ENCODE measurements at regions of chr3 and their contacts with region 1.

Region 1: DNA sequence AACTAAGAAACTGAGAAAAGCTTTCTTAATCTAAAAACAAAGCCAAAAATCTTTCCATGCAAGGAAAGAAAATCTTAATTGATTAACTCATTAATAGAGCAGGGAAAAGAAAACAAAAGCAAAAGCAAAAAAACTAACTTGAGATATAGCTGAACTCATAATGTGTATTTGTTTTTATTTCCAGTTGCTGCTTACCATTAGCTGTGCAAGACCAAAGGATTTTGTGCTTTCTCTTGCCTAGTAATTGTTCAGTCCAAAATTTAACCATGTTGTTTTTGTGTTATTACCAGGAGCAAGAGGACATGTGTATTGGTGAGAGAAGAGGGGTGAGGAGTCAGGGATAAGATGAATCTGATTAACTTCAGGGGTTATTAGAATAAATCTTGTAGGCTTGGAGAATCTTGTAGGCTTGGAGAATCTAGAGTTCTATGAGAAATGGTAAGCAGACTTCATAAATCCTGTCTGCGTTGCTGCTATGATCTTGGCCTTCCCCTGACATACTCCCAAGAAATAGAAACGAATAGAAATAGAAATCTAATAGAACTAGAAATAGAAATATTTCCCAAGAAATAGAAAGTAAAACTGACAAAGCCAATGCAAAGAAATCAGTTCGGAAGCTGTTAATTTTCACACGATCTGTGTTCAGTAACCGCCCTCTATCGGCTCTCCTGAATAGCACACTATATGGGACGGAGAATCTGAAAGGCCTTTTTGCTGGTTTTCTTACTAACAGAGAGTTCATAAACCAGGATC is 72.6 kb upstream of the TNFSF10 start:
- DNase-seq: peak in 7 of 9 donors; percentile 38 to 75 (median 64)
- ATAC-seq: peak; percentile 61
- H3K4me3 ChIP-seq: peak overlapping the region; percentile 44
- H3K4me3 Mint-ChIP-seq: peak overlapping the region; percentile 39 to 92 (median 86)
- H3K27ac ChIP-seq: peak overlapping the region; percentile 70
- H3K27ac Mint-ChIP-seq: peak overlapping the region; percentile 53 to 96 (median 89)
- H3K4me1 ChIP-seq: peaks cover 35% of the 10 kb centered on the region in 2 donors
- H3K4me1 Mint-ChIP-seq: peaks cover 43 to 67% (median 58%) of the 10 kb centered on the region in 7 donors
- H3K27me3 ChIP-seq: no peaks in the 10 kb centered on the region
- H3K27me3 Mint-ChIP-seq: no peaks in the 10 kb centered on the region

Region 2: GRCh38 chr3:170869645-170870593 is 1725.9 kb before region 1 on chr3 and contains the start of gene RPL22L1:
- CTCF ChIA-PET with region 1: no interaction called
- POLR2A ChIA-PET with region 1: no interaction called
- intact Hi-C with region 1: loop called in 1 of 2 experiments (anchors 10 kb)
- DNase-seq: peak; percentile 83 to 92 (median 90)
- ATAC-seq: peak; percentile 96
- H3K4me3 ChIP-seq: peak within 1 kb of the TSS; percentile 84
- H3K4me3 Mint-ChIP-seq: peak within 1 kb of the TSS; percentile 93 to 98 (median 94)
- H3K27ac ChIP-seq: peak within 1 kb of the TSS; percentile 86
- H3K27ac Mint-ChIP-seq: peak within 1 kb of the TSS; percentile 96 to 99 (median 98)
- H3K4me1 ChIP-seq: peaks cover 22% of the 10 kb centered on the region in 2 donors
- H3K4me1 Mint-ChIP-seq: peaks cover 10 to 41% (median 26%) of the 10 kb centered on the region in 7 donors
- H3K27me3 ChIP-seq: no peaks in the 10 kb centered on the region
- H3K27me3 Mint-ChIP-seq: peaks cover 0 to 4% (median 0%) of the 10 kb centered on the region in 5 donors
- total RNA-seq, gene RPL22L1: 27.5 to 62.6 (median 47.9) TPM

Region 3: DNA sequence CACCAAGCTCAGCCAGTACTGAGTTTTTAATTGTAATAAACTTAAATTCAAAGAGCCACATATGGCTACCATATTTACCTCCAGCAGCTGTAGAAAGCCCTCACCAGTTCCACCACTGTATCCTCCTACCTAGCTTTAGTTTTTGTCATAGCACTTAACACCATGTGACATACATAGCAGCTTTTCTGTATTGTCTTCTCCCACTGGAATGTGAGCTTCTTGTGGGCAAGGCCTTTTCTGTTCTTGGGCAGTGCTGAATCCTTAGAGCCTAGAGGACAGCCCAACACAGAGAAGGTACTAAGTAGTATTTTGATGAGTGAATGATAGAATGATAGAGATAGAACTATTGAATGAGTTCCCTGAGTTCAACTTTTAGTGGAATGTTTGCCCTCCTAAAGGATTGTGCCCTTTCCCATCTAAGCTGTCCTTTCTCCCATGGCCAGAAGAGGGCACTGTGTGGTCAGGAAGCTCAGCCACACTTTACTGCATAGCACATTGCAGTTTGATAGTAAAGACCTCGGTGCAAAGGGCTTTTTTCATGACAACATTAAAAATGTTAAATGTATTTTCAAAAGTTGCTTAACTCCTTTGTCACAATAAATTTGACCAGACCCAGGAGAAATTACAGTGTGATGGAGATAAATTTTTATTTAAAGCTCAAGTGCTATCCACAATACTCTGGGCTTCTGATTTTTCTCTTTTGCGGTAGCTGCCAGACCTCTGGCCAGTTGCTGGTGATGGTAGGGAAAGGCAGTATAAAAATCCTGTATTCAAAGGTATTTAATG is 263.4 kb before region 1 on chr3:
- CTCF ChIA-PET with region 1: interaction called, 7 read pairs
- POLR2A ChIA-PET with region 1: no interaction called
- intact Hi-C with region 1: loop called in 1 of 2 experiments (anchors 1 kb)
- DNase-seq: peak; percentile 3 to 55 (median 41)
- ATAC-seq: peak; percentile 92
- H3K4me3 ChIP-seq: no peak overlapping the region
- H3K4me3 Mint-ChIP-seq: no peak overlapping the region
- H3K27ac ChIP-seq: no peak overlapping the region
- H3K27ac Mint-ChIP-seq: peak overlapping the region in 2 of 9 donors; percentile 12 to 36
- H3K4me1 ChIP-seq: no peaks in the 10 kb centered on the region
- H3K4me1 Mint-ChIP-seq: peaks cover 0 to 10% (median 4%) of the 10 kb centered on the region in 7 donors
- H3K27me3 ChIP-seq: no peaks in the 10 kb centered on the region
- H3K27me3 Mint-ChIP-seq: no peaks in the 10 kb centered on the region

Region 4: DNA sequence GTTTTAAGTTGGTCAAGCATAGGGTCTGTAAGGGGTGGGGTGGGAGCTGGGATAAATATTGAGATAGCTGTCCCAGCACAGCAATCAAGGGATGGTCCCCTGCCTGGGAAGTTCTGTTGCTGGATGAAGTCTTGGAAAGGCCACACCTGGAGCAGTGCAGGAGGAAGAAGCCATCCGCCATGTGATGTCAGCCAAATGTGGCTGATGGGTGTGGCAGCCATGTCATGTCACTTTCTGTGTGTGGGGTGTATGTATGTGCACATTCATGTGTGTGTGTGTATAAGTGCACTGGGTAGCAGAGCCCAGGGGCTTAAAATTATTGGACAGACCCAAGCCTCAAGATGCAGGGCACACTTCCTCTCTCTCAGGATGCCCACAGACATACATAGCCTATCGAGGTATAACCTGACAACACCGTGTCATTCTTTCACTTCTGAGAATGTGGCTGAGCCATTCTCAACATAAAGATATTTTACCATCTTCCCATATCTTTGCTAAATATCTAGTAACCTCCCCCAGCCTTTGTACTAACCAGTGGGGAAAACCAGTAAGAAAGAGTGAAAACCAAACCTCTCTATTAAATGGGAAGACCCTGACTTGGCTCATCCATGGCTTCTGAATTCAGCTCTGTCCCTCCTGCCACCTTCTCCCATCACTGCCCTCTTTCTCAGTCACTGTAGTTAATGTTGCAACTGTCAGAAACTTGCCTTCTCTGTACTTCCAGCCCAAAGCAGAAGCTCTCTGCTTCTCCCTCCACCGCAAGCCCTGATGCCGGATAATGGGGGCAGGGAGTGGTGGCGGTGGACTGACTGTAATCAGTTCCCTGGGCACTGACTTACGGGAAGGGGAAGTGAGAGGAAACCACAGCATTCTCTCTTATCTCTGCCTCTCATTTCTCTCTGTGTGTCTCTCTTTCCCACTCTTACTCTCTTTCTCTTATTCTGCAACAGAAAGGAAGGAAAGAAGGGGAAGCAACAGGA is 83.7 kb before region 1 on chr3:
- CTCF ChIA-PET with region 1: interaction called, 11 read pairs
- POLR2A ChIA-PET with region 1: interaction called, 5 read pairs
- intact Hi-C with region 1: loop called (anchors 1 kb)
- DNase-seq: peak in 7 of 9 donors; percentile 28 to 76 (median 48)
- ATAC-seq: peak; percentile 87
- H3K4me3 ChIP-seq: peak overlapping the region; percentile 2
- H3K4me3 Mint-ChIP-seq: peak overlapping the region; percentile 62 to 93 (median 80)
- H3K27ac ChIP-seq: peak overlapping the region; percentile 61
- H3K27ac Mint-ChIP-seq: peak overlapping the region; percentile 88 to 100 (median 93)
- H3K4me1 ChIP-seq: peaks cover 52 to 56% of the 10 kb centered on the region in 2 donors
- H3K4me1 Mint-ChIP-seq: peaks cover 65 to 91% (median 84%) of the 10 kb centered on the region in 7 donors
- H3K27me3 ChIP-seq: no peaks in the 10 kb centered on the region
- H3K27me3 Mint-ChIP-seq: no peaks in the 10 kb centered on the region

Region 5: DNA sequence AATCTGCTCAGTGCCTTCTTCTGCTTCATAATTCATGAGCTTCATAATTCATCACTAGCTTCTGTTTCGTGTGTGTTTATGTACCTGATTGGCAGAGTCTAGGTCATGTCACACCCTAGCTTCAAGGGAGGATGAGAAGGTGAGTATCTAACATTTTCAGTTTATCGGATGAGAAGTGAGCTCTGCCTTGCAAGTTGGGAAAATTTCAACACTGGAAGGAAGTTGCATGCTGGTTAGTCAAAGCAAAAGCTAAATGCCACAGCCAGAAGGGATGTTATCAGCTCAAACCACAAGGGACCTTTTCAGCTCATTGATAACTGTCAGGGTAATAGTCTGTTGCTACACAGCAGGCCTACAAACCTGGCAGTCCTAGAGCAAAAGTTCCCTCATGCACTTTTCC is 65.3 kb before region 1 on chr3:
- CTCF ChIA-PET with region 1: interaction called, 9 read pairs
- POLR2A ChIA-PET with region 1: interaction called, 8 read pairs
- intact Hi-C with region 1: loop called in 1 of 2 experiments (anchors 1 kb)
- DNase-seq: peak in 4 of 9 donors; percentile 31 to 43 (median 38)
- ATAC-seq: peak; percentile 83
- H3K4me3 ChIP-seq: peak overlapping the region; percentile 2
- H3K4me3 Mint-ChIP-seq: peak overlapping the region in 9 of 10 donors; percentile 14 to 84 (median 69)
- H3K27ac ChIP-seq: peak overlapping the region; percentile 9
- H3K27ac Mint-ChIP-seq: peak overlapping the region; percentile 40 to 93 (median 80)
- H3K4me1 ChIP-seq: peaks cover 14 to 18% of the 10 kb centered on the region in 2 donors
- H3K4me1 Mint-ChIP-seq: peaks cover 15 to 69% (median 30%) of the 10 kb centered on the region in 7 donors
- H3K27me3 ChIP-seq: no peaks in the 10 kb centered on the region
- H3K27me3 Mint-ChIP-seq: no peaks in the 10 kb centered on the region

Region 6: DNA sequence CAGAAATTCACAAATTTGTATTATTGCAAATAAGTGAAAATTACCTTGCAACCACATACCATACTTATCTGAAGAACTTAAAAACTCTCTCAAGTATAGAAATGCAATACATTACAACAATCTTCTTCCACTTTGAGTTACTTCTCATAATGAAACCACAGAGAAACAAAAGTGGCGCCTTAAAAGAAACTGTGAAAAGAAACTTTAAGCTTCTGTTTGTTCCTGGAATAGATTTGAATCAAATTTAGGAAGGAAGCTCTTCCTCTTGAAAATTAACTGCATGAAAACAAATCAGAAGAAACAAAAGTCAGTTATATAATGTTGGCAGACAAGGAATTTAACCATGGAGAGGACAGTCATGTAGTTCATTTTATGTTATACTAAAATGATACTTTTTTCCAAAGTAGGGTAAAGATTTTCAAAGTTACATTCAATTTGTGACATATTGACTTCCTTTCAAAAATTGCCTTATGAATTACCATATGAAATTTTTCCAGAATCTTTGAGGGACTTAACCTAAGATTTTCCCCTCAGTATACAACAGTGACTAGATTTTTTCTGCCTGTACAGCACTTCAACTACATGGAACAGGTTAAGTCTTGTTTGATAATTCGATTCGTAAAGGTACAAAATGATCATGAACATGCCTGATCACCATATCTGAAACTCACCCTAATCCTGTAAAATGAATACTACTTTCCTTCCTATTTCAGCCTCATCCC is 15.0 kb before region 1 on chr3:
- CTCF ChIA-PET with region 1: interaction called, 4 read pairs
- POLR2A ChIA-PET with region 1: interaction called, 10 read pairs
- intact Hi-C with region 1: loop called (anchors 1 kb)
- DNase-seq: peak in 2 of 9 donors; percentile 29 to 33
- ATAC-seq: no peak
- H3K4me3 ChIP-seq: peak overlapping the region; percentile 19
- H3K4me3 Mint-ChIP-seq: peak overlapping the region; percentile 49 to 85 (median 74)
- H3K27ac ChIP-seq: peak overlapping the region; percentile 57
- H3K27ac Mint-ChIP-seq: peak overlapping the region; percentile 83 to 97 (median 93)
- H3K4me1 ChIP-seq: peaks cover 29 to 41% of the 10 kb centered on the region in 2 donors
- H3K4me1 Mint-ChIP-seq: peaks cover 65 to 96% (median 94%) of the 10 kb centered on the region in 7 donors
- H3K27me3 ChIP-seq: no peaks in the 10 kb centered on the region
- H3K27me3 Mint-ChIP-seq: no peaks in the 10 kb centered on the region

Region 7: DNA sequence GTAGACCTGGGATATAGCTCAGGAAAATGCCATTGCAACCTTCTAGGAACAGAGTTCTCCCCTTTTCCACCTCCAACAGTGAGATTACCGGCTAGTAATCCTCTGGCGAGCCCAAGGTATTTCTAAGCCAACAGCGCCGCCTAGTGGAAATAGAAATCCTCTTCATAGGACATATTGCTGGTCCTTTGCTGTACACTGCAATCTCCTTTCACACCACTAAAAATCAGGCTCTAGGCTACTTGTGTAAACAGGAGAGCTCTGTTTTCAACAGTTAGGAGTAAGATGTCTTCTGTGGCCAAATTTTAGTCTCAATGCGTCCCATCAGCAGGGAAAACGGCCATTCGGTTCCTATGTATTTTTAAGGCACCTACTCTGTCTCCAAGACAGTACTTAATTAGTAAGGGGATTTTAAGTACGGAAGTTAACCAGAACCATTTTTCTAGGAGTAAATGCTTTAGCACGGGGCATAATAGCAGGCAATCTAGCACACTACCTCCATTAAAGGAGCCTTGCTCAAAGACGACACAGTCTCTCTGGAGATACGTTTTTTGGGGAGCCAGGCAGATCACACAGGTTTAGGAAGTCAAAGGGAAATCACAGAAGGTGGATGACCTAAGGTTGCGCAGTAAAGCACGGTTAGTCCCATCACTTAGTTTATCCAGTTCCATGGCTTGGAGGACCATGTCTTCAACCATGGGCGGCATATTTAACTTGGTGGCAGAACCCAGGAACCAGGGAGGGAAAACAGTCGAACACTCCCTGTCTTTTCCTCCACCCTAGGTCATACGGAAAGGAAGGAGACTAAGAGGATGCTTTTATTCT is 71.3 kb after region 1 on chr3:
- CTCF ChIA-PET with region 1: no interaction called
- POLR2A ChIA-PET with region 1: no interaction called
- intact Hi-C with region 1: loop called in 1 of 2 experiments (anchors 2 kb)
- DNase-seq: peak; percentile 38 to 78 (median 67)
- ATAC-seq: peak; percentile 96
- H3K4me3 ChIP-seq: no peak overlapping the region
- H3K4me3 Mint-ChIP-seq: peak overlapping the region in 5 of 10 donors; percentile 0 to 47 (median 21)
- H3K27ac ChIP-seq: no peak overlapping the region
- H3K27ac Mint-ChIP-seq: peak overlapping the region in 2 of 9 donors; percentile 35 to 43
- H3K4me1 ChIP-seq: peaks cover 4 to 11% of the 10 kb centered on the region in 2 donors
- H3K4me1 Mint-ChIP-seq: peaks cover 11 to 18% (median 15%) of the 10 kb centered on the region in 7 donors
- H3K27me3 ChIP-seq: no peaks in the 10 kb centered on the region
- H3K27me3 Mint-ChIP-seq: peaks cover 0 to 12% (median 0%) of the 10 kb centered on the region in 5 donors

Measured in naive thymus-derived CD4-positive, alpha-beta T cell (primary cell).